Brain microvascular endothelial cell (primary cell): ENCODE measurements at regions of chr18 and their contacts with region 1.

Region 1: DNA sequence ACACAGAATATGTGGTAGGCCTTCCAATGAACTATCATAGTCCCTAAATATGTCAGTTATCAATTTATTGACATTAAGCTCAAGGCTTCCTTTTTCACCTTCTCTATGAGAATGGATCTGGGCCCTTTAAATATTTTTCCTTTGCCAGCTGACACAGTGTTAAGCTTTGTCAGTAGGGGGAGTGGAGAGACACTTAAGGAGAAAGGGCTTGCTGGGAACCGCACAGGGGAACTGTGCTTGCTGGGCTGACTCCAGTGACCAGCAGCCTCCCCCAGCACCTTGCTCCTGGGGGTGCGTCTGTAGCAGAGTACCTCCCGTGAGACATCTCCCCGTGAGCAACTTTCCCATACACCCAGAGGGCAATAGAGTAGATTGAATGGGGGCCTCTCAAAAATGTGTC is 6.5 kb upstream of the PTPN2 start:
- DNase-seq: no peak
- H3K4me3 ChIP-seq: no peak overlapping the region
- H3K27ac ChIP-seq: no peak overlapping the region
- H3K27me3 ChIP-seq: no peaks in the 10 kb centered on the region
- CTCF ChIP-seq: peak; percentile 39

Region 2: DNA sequence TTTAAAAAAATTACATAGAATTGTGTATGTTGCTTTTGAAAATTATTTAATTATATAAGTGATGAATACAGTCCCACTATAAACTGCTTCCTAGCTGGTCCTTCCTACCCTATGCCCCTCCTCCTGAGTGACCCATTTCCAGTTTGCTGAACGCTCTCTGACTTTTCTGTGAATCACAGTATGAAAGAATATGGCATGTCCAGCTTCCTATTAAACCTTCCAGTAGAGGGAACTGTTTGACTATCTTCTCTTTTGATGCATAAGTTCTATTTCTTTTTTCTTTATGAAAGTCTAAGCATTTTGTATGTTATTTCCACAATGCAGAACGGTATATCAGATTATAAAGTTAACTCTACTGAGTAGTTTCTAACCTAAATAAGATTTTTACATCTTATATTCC is 146.4 kb before region 1 on chr18:
- in situ Hi-C with region 1: loop called (anchors 5 kb)
- DNase-seq: peak; percentile 35
- H3K4me3 ChIP-seq: no peak overlapping the region
- H3K27ac ChIP-seq: no peak overlapping the region
- H3K27me3 ChIP-seq: no peaks in the 10 kb centered on the region
- CTCF ChIP-seq: peak; percentile 56